Gastrocnemius medialis (tissue), 4 donors: ENCODE measurements at regions of chr2 and their contacts with region 1.

Region 1: GRCh38 chr2:165203689-165204559 is at the start of gene SCN3A:
- DNase-seq: no peak
- ATAC-seq: no peak
- H3K4me3 ChIP-seq: peak within 1 kb of the TSS in 3 of 4 donors; percentile 5 to 29 (median 17)
- H3K27ac ChIP-seq: no peak within 1 kb of the TSS
- H3K4me1 ChIP-seq: no peaks in the 10 kb centered on the region
- H3K27me3 ChIP-seq: no peaks in the 10 kb centered on the region
- CTCF ChIP-seq: peak in 2 of 5 experiments; percentile 55 to 61
- POLR2A ChIP-seq: no peak
- total RNA-seq, gene SCN3A: 0.53 to 1.8 (median 1.3) TPM

Region 2: DNA sequence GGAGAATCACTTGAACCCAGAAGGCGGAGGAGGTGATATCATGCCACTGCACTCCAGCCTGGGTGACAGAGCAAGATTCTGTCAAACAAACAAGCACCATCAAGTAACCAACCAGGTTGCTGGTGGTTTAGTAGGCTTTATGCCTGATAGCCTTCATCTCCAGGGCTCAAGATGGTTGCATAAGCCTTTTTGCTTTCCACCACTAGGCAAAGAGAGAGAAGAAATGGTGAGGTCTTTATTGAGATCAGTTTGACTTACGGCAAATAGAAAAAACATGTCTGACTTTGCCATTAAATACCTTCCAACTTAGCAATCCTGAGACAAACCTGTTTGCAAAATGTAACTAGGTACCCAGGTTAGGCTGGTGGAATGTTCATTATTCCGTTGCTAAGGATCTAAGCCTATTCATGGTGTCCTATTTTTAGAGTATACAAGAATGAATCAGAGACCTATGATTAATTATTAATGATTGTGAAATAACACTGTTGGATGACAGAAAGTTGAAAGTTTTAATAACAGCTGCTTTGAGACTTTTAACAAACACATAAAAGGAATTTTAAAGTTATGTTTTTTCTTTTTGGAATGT is 195.1 kb before region 1 on chr2:
- in situ Hi-C with region 1: loop called in 2 of 4 experiments (anchors 10 kb)
- intact Hi-C with region 1: no loop called
- DNase-seq: no peak
- ATAC-seq: no peak
- H3K4me3 ChIP-seq: no peak overlapping the region
- H3K27ac ChIP-seq: no peak overlapping the region
- H3K4me1 ChIP-seq: no peaks in the 10 kb centered on the region
- H3K27me3 ChIP-seq: no peaks in the 10 kb centered on the region
- CTCF ChIP-seq: no peak
- POLR2A ChIP-seq: no peak

Region 3: DNA sequence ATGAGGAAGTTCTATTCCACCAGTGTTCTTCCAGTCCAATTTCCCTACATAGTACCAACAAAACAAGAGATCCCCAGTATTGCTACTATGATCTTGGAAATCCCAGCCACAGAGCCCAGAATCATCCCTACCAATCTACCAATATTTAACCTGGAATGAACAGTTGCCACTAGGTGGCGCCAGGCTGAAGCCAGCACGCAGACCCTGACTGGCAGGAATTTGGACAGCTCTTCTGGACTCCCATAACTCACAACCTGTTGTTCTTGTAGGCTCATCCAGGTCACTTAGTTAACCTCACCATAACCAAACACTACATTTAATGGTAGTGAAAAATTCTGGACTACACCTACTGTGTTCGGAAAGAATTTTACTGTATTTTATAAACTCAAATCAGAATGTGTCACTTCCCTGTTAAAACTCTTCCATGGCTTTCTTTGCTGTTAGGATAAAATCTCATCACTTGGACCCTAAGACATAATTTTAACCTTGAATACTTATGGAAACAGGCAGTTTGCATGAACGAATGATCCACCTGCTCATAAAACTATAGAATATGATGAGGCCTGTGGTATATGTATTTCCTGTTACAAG is 188.8 kb before region 1 on chr2:
- in situ Hi-C with region 1: no loop called
- intact Hi-C with region 1: loop called (anchors 5 kb)
- DNase-seq: no peak
- ATAC-seq: no peak
- H3K4me3 ChIP-seq: no peak overlapping the region
- H3K27ac ChIP-seq: no peak overlapping the region
- H3K4me1 ChIP-seq: no peaks in the 10 kb centered on the region
- H3K27me3 ChIP-seq: no peaks in the 10 kb centered on the region
- CTCF ChIP-seq: peak in 3 of 5 experiments; percentile 44 to 75 (median 73)
- POLR2A ChIP-seq: no peak